ENCODE measurements at regions of chr1 and their contacts with region 1.

Region 1: GRCh38 chr1:182649041-182649440 is 35.3 kb downstream of the RGS8 start:
- DNase-seq: peak; percentile 45
- H3K4me3 ChIP-seq: peak overlapping the region; percentile 35
- H3K27ac ChIP-seq: peak overlapping the region; percentile 53
- H3K4me1 ChIP-seq: peaks cover 71% of the 10 kb centered on the region
- CTCF ChIP-seq: 0 out of 2 replicates have a peak, but pooled peaks have one; percentile 30

Region 2: GRCh38 chr1:182614796-182615454 is 34.1 kb before region 1 on chr1:
- CTCF ChIA-PET with region 1: interaction called, 4 read pairs
- POLR2A ChIA-PET with region 1: interaction called, 17 read pairs
- intact Hi-C with region 1: no loop called
- DNase-seq: peak; percentile 43
- H3K4me3 ChIP-seq: peak overlapping the region; percentile 61
- H3K27ac ChIP-seq: peak overlapping the region; percentile 71
- H3K4me1 ChIP-seq: peaks cover 94% of the 10 kb centered on the region
- CTCF ChIP-seq: no peak

Region 3: GRCh38 chr1:182629499-182630096 is 19.4 kb before region 1 on chr1:
- CTCF ChIA-PET with region 1: interaction called, 4 read pairs
- POLR2A ChIA-PET with region 1: interaction called, 24 read pairs
- intact Hi-C with region 1: loop called (anchors 1 kb)
- DNase-seq: peak; percentile 59
- H3K4me3 ChIP-seq: peak overlapping the region; percentile 37
- H3K27ac ChIP-seq: peak overlapping the region; percentile 52
- H3K4me1 ChIP-seq: peaks cover 99% of the 10 kb centered on the region
- CTCF ChIP-seq: no peak

Region 4: GRCh38 chr1:182662121-182662890 is 13.3 kb after region 1 on chr1:
- CTCF ChIA-PET with region 1: no interaction called
- POLR2A ChIA-PET with region 1: interaction called, 33 read pairs
- intact Hi-C with region 1: no loop called
- DNase-seq: peak; percentile 24
- H3K4me3 ChIP-seq: no peak overlapping the region
- H3K27ac ChIP-seq: no peak overlapping the region
- H3K4me1 ChIP-seq: peaks cover 40% of the 10 kb centered on the region
- CTCF ChIP-seq: peak; percentile 47; the same call in 1 of the 2 replicates

Measured in OCI-LY7 (cell line).